Psoas muscle (tissue), 8 donors: ENCODE measurements at regions of chr3 and their contacts with region 1.

Region 1: DNA sequence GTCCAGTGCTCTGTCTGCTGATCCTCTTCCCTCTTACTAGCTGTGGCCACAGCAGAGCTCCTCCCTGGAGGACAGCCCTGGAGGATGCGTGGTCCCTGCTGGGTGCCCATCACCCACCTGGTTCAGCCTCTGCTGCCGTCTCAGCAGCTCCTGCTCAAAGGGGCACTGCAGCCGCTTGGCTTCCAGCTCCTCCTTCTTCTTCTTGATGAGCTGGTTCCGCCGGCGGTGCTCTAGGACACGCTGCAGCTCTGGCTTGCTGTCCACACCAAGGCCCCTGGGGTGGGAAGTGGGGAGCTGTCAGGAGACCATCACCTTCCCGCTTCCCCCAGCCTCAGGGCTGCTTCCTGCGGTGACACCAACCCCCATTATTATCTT is 10.1 kb downstream of the FAM107A start:
- DNase-seq: no peak
- ATAC-seq: no peak
- H3K4me3 ChIP-seq: no peak overlapping the region
- H3K27ac ChIP-seq: no peak overlapping the region
- H3K4me1 ChIP-seq: no peaks in the 10 kb centered on the region
- H3K27me3 ChIP-seq: no peaks in the 10 kb centered on the region
- CTCF ChIP-seq: no peak

Region 2: GRCh38 chr3:58630076-58630709 is 63.1 kb after region 1 on chr3:
- intact Hi-C with region 1: loop called (anchors 1 kb)
- DNase-seq: no peak
- ATAC-seq: peak; percentile 69 to 84 (median 73)
- H3K4me3 ChIP-seq: no peak overlapping the region
- H3K27ac ChIP-seq: no peak overlapping the region
- H3K4me1 ChIP-seq: peaks cover 10% of the 10 kb centered on the region
- H3K27me3 ChIP-seq: no peaks in the 10 kb centered on the region
- CTCF ChIP-seq: peak; percentile 95